Left cardiac atrium (tissue), 4 donors: ENCODE measurements at regions of chr15 and their contacts with region 1.

Region 1: DNA sequence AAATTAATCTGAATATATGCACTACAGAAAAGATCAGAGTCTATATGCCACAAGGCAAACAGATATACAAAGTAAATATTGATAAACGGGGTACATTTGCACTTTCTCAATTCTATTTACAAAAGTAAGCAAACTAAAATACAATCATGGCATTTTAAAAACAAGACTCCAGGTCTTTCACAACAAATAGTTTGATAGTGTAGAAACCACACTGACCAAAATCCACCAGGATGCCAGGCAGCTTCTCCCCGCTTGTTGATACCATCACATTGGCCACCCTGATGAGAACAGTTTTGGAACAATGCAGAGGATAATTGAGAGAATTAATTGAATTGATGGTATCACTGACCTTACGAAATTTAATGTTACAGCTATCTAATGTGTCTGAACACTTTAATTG is 190.6 kb upstream of the TMCO5A start:
- DNase-seq: no peak
- ATAC-seq: no peak

Region 2: GRCh38 chr15:37783290-37783689 is 39.5 kb after region 1 on chr15:
- intact Hi-C with region 1: loop called in 1 of 2 experiments (anchors 2 kb)
- DNase-seq: no peak
- ATAC-seq: peak in 1 of 2 donors; percentile 34